A549 (cell line): ENCODE measurements at regions of chr2 and their contacts with region 1.

Region 1: GRCh38 chr2:181715033-181715630 is 34.8 kb upstream of the NEUROD1 start:
- DNase-seq: peak; percentile 16 to 78
- ATAC-seq: peak; percentile 76 to 90; a peak in 5 of 6 replicates
- H3K4me3 ChIP-seq: no peak overlapping the region
- H3K27ac ChIP-seq: no peak overlapping the region
- H3K4me1 ChIP-seq: no peaks in the 10 kb centered on the region
- CTCF ChIP-seq: peak; percentile 87
- EP300 ChIP-seq: no peak
- POLR2A ChIP-seq: no peak
- RAD21 ChIP-seq: peak; percentile 90 to 94

Region 2: DNA sequence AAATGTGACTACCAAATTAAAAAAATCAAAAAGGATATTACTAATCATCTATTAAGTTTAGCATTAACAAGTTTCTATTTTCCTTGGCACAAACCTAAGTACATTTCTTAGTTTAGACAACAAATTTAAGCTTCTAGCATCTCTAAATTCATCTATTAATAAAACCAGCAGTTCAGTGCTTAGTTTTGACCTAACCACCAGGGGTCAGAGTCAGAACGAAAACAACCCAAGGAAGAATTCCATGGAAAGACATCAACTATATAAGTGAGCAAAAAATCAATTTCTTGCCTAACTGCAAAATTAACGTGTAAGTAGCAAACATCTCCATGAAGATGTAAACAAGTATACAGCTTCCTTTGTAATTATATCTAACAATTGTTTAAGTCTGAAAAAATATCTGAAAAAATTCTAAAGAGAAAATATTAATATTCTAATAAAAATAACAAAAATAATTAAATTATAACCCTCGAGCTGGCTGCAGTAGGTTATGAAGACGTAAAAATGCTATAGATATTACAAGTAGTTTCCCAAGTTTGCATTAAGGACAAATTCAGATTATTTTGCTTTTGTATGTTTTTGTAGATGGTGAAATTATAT is 141.9 kb before region 1 on chr2:
- CTCF ChIA-PET with region 1: interaction called, 129 read pairs
- POLR2A ChIA-PET with region 1: no interaction called
- DNase-seq: peak; percentile 13 to 40
- ATAC-seq: peak in 1 of 2 experiments; percentile 72; a peak in 3 of 6 replicates
- H3K4me3 ChIP-seq: no peak overlapping the region
- H3K27ac ChIP-seq: no peak overlapping the region
- H3K4me1 ChIP-seq: no peaks in the 10 kb centered on the region
- CTCF ChIP-seq: peak; percentile 73
- EP300 ChIP-seq: no peak
- POLR2A ChIP-seq: no peak
- RAD21 ChIP-seq: peak; percentile 79 to 80

Region 3: DNA sequence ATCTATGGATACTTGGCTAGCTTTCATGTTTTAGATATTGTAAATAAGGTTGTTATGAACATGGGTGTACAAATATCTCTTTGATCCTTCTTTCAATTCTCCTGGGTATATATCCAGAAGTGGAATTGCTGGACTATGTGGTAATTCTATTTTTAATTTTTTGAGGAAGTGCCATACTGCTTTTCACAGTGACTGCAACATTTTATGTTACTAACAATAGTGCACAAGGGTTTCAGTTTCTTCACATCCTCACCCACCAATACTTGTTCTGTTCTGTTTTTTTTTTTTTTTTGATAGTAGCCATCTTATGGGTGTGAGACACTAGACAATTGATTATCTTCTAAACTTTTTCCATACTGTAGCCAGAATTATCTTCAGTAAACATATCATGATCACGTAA is 17.6 kb before region 1 on chr2:
- CTCF ChIA-PET with region 1: interaction called, 11 read pairs
- POLR2A ChIA-PET with region 1: no interaction called
- DNase-seq: no peak
- ATAC-seq: no peak
- H3K4me3 ChIP-seq: no peak overlapping the region
- H3K27ac ChIP-seq: no peak overlapping the region
- H3K4me1 ChIP-seq: no peaks in the 10 kb centered on the region
- CTCF ChIP-seq: no peak
- EP300 ChIP-seq: no peak
- POLR2A ChIP-seq: no peak
- RAD21 ChIP-seq: no peak

Region 4: DNA sequence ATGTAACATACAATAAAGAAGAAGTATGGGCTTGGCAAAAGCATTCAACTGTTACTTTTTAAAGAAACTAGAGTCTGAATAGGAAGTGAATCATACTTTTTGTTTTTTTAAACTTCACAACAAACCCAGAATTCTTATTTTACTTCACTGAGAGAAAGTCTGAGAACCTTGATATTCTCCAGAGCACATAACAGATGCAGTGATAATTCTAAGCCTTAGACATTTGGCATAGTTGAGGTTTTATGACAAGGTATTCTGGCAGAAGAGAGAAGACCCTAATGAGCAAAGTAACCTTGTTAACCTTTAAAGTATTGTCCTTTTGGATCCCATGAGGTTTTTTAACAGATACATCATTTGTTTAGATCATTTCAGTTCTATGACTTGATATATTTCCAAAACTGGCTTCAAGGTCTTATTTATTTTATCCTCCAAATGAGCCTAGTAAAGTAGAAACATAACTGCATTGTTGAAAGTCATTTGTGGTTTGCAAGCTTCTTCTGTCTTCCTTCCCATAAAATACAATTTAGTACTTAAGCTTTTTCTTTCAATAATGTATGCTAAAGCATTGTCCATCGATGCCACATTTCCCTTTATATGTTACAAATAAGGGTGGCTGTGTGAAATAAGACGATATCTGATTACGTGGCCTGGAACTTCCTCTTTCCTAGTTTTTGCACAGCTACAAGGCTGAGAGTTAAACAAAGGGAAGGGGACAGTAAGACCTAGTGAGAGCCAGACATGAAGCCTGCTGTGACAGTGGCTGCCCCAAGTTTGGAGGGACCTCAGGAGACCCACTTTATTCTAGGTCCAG is 90.3 kb after region 1 on chr2:
- CTCF ChIA-PET with region 1: no interaction called
- POLR2A ChIA-PET with region 1: no interaction called
- DNase-seq: no peak
- ATAC-seq: no peak
- H3K4me3 ChIP-seq: no peak overlapping the region
- H3K27ac ChIP-seq: 0 out of 6 replicates have a peak overlapping the region, but pooled peaks of 1 of the 2 experiments have one; percentile 27
- H3K4me1 ChIP-seq: peaks cover 21% of the 10 kb centered on the region
- CTCF ChIP-seq: no peak
- EP300 ChIP-seq: no peak
- POLR2A ChIP-seq: no peak
- RAD21 ChIP-seq: no peak